ENCODE measurements at regions of chr11 and their contacts with region 1.

Region 1: DNA sequence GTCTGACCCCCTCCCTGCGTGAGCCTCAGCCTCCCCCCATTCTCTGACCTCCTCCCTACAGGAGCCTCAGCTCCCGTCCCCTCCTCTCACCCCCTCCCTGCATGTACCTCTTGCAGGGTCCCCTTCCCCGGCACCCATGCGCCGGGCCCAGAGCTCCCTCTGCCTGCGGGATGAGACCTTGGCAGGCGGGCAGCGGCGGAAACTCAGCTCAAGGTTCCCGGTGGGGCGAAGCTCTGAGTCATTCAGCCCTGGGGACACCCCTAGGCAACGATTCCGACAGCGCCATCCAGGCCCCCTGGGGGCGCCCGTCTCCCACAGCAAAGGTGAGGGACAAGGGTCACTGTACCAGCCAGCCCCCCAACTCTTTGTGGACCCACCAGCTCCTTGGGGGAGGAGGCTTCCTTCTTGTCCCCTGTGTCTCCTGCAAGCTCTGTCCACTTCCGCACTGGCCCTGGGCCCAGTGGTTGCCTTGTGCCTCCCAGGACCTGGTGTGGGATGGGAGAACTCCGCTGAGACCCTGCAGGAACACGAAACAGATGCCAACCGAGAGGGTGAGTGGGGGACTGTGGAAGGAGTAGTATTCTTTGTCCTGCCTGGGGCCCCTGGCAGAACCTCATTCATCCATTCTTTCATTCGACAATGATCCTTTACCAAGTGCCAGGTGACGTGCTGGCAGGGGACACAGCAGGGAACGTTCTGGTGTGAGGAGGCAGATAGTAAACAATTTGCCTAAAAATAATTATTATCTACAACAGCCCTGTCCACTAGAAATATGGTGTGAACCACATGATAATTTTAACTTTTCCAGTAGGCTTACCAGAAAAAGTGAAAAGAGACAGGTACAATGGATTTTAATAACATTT is 3.7 kb upstream of the RPS6KA4 start:
- DNase-seq: peak; percentile 93
- H3K4me3 ChIP-seq: no peak overlapping the region
- H3K27ac ChIP-seq: no peak overlapping the region
- H3K4me1 ChIP-seq: peaks cover 29% of the 10 kb centered on the region
- H3K27me3 ChIP-seq: no peaks in the 10 kb centered on the region
- CTCF ChIP-seq: peak; percentile 99

Region 2: GRCh38 chr11:64000026-64000739 is 355.1 kb before region 1 on chr11:
- CTCF ChIA-PET with region 1: interaction called, 12 read pairs
- POLR2A ChIA-PET with region 1: no interaction called
- intact Hi-C with region 1: no loop called
- DNase-seq: peak; percentile 91
- H3K4me3 ChIP-seq: peak overlapping the region; percentile 41
- H3K27ac ChIP-seq: no peak overlapping the region
- H3K4me1 ChIP-seq: peaks cover 50% of the 10 kb centered on the region
- H3K27me3 ChIP-seq: no peaks in the 10 kb centered on the region
- CTCF ChIP-seq: peak; percentile 75

Region 3: DNA sequence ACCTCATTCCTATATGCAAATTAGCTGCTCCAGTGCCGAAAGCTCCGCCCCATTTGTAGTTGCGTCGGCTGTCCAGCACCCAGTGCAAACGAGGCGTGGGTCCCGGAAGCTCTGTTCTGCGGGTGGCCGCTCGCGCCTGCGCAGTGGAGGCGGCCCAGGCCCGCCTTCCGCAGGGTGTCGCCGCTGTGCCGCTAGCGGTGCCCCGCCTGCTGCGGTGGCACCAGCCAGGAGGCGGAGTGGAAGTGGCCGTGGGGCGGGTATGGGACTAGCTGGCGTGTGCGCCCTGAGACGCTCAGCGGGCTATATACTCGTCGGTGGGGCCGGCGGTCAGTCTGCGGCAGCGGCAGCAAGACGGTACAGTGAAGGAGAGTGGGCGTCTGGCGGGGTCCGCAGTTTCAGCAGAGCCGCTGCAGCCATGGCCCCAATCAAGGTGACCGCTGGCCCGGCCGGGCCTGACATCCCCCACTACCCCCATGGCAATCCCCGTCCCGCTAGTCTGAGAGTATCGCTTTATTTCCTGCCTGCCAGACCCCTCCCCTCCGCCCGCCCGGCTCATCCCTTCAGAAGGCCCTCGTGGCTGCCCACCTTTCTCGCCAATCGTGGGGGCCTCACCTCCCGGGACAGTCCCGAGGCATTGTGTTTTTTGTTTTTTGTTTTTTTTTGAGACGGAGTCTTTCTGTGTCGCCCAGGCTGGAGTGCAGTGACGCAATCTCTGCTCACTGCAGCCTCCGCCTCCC is 37.2 kb before region 1 on chr11 and contains the start of gene PRDX5:
- CTCF ChIA-PET with region 1: interaction called, 29 read pairs
- POLR2A ChIA-PET with region 1: no interaction called
- intact Hi-C with region 1: no loop called
- DNase-seq: peak; percentile 99
- H3K4me3 ChIP-seq: peak within 1 kb of the TSS; percentile 85
- H3K27ac ChIP-seq: peak within 1 kb of the TSS; percentile 94
- H3K4me1 ChIP-seq: peaks cover 15% of the 10 kb centered on the region
- H3K27me3 ChIP-seq: no peaks in the 10 kb centered on the region
- CTCF ChIP-seq: peak; percentile 56
- total RNA-seq, gene PRDX5: 206 and 221 TPM in 2 replicates

Region 4: DNA sequence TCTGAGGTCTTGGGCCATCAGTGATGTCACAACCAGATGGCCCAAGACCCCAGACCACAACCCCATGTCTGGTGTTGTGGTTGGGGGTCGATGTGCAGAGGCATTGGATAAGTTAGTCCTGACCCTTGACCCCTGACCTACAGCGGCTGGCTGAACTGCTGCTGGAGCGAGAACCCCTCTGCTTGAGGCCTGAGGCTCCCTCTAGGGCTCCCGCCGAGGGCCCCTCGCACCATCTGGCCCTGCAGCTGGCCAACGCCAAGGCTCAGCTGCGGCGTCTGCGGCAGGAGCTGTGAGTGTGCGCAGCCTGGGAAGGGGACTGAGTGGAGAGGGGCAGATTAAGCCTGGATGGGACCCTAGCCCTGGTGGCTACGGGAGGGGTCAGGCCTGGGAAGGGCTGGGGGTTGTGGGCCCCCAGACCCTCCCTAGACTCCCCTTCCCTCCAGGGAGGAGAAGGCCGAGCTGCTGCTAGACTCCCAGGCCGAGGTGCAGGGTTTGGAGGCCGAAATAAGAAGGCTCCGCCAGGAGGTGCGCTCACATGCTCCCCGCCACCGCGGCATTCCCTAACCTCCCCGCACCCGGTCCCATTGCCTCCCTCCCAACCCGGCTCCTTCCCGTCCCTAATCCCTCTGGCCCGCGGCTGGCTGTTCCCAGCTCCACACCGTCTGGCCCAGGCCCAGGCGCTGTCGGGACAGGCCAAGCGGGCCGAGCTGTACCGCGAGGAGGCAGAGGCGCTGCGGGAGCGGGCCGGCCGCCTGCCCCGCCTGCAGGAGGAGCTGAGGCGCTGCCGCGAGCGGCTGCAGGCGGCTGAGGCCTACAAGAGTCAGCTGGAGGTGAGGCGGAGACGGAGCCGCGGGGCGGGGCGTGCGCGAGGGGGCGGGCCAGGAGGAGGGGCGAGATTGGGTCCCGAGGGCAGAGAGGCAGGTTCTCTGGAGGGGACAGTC is 13.2 kb before region 1 on chr11:
- CTCF ChIA-PET with region 1: interaction called, 25 read pairs
- POLR2A ChIA-PET with region 1: interaction called, 13 read pairs
- intact Hi-C with region 1: no loop called
- DNase-seq: peak; percentile 93
- H3K4me3 ChIP-seq: peak overlapping the region; percentile 38
- H3K27ac ChIP-seq: peak overlapping the region; percentile 70
- H3K4me1 ChIP-seq: no peaks in the 10 kb centered on the region
- H3K27me3 ChIP-seq: no peaks in the 10 kb centered on the region
- CTCF ChIP-seq: peak; percentile 57

Region 5: DNA sequence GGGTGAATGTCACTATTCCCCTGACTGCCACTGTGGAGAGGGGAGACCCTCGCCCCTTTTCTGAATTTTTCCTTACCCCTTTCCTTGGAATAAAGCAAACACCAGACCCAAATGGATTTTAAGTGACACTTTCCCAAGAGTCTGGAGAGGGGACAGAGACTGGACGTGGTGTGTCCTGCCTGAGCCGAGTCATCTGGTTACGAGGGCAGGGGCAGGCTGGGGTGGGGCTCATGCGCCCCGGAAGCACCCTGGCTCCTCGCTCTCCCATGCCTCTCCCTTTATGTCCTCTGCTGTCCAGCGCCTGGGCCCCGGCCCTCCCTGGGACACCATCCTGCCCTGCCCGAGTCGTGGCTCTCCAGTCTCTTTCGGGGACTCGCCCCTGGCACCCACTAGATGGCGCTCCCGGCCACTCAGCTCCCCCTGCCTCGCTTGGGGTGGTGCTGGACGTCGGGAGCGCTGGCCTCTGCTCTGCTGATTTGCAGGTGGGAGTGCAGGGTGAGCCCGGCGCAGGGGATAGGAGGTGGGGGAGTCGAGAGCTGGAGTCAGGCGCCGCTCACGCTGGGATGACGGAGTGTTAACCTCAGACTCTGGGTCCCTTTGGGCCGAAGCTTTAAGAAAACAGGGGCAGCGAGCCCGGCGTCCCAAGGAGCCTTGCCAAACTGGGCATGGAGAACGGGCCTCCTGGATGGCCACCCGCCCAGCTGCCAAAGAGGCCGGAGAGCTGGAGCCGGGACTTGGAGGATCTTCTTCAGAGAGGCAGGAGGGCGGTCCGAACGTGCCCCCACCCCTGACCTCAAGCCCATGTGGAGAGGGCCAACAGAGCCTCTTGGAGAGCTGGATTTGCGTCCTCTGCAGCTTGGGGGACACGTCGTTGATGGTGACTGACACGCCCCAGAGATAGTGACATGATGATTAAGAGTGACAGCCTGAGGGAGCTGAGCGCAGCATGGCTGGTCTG is 93.6 kb after region 1 on chr11:
- CTCF ChIA-PET with region 1: interaction called, 13 read pairs
- POLR2A ChIA-PET with region 1: no interaction called
- intact Hi-C with region 1: no loop called
- DNase-seq: peak; percentile 85
- H3K4me3 ChIP-seq: peak overlapping the region; percentile 39
- H3K27ac ChIP-seq: no peak overlapping the region
- H3K4me1 ChIP-seq: peaks cover 16% of the 10 kb centered on the region
- H3K27me3 ChIP-seq: no peaks in the 10 kb centered on the region
- CTCF ChIP-seq: peak; percentile 96

Region 6: DNA sequence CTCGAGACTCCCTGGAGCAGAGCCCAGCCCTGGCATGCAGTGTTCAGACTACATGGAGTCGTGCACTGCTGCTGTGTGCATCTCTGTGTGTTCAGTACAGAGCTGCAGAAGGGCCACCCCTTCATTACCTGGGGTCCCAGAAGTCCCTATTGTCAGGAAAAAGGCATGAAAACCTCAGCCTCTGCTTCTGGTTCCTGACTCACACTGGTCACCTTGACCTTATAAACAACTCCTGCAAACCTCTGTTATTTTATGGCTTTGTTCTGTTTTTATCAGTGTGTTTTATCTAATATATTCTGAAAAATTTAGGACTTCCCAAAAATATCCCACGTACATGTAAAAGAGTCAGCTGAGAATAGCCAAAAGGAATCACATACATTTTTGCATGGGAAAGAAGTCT is 151.4 kb after region 1 on chr11:
- CTCF ChIA-PET with region 1: no interaction called
- POLR2A ChIA-PET with region 1: no interaction called
- intact Hi-C with region 1: no loop called
- DNase-seq: no peak
- H3K4me3 ChIP-seq: no peak overlapping the region
- H3K27ac ChIP-seq: no peak overlapping the region
- H3K4me1 ChIP-seq: no peaks in the 10 kb centered on the region
- H3K27me3 ChIP-seq: peaks cover 28% of the 10 kb centered on the region
- CTCF ChIP-seq: no peak

Region 7: DNA sequence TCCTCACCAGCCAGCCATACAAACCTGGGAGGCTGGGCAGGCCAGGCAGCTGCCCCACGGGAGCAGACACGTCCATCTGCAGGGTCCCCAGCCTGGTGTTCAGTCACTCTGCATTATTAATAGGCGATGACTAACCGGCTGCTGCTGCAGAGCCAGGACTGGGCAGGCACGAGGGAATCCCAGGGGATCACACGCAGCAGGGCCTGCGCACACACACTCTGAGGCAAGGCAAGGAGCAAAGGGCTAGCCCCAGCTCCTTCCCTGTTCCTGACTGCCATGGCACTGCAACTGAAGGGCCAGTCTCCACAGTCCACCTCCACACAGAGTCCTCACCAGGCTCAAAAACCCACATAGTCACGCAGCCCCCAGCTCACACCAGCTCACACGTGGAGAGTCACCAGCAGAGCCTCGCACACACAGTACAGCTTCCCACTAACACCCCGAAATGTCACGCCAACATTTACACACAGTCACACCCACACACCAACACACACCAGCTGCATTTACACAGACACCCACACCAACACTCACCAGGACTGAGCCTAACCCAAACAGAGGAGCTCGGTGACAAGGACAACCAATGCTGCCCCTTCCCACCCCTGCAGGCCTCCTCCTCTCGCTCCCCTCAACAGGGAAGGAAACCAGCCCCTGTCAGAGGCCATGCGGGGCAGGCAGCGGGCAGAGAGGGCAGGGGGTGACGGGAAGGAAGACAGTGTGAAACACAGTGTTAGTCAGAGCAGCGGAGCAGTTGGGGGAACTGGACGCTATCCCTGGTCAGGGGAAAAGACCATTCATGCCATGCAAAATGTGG is 320.3 kb after region 1 on chr11:
- CTCF ChIA-PET with region 1: no interaction called
- POLR2A ChIA-PET with region 1: no interaction called
- intact Hi-C with region 1: no loop called
- DNase-seq: peak; percentile 88
- H3K4me3 ChIP-seq: no peak overlapping the region
- H3K27ac ChIP-seq: no peak overlapping the region
- H3K4me1 ChIP-seq: peaks cover 13% of the 10 kb centered on the region
- H3K27me3 ChIP-seq: peaks cover 57% of the 10 kb centered on the region
- CTCF ChIP-seq: no peak

Measured in A673 (cell line).